Colonic mucosa (tissue), 4 donors: ENCODE measurements at regions of chr7 and their contacts with region 1.

Region 1: GRCh38 chr7:121547544-121548092 is 151.5 kb upstream of the FAM3C start:
- DNase-seq: no peak
- H3K4me3 ChIP-seq: no peak overlapping the region
- H3K27ac ChIP-seq: no peak overlapping the region
- H3K4me1 ChIP-seq: no peaks in the 10 kb centered on the region
- H3K27me3 ChIP-seq: no peaks in the 10 kb centered on the region
- CTCF ChIP-seq: peak; percentile 76

Region 2: DNA sequence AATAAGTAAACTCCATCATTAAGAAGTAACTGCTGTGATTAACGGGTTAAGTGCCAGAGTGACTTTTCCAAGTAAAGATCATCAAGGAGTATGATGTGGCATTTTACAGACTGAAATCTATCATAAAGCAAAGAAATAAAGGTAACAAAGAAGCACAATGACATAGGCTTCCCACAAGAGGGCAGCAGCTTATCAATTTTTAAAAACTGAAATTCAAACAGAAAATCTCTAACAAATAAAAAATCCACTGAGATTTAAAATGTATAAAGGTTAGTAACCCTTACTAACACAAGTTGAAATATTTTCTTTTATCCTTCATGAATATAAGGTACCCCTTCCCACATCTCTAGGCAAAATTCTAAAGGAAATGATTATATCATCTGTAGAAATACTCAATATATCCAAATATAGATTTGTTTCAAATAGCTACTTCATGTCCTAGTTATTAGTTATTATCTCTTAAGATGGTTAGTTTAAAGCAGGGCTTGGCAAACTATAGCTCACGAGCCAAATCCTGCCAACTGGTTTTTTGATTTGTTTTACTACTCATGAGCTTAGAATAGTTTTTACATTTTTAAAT is 180.7 kb before region 1 on chr7:
- intact Hi-C with region 1: loop called (anchors 2 kb)
- DNase-seq: no peak
- H3K4me3 ChIP-seq: no peak overlapping the region
- H3K27ac ChIP-seq: no peak overlapping the region
- H3K4me1 ChIP-seq: no peaks in the 10 kb centered on the region
- H3K27me3 ChIP-seq: no peaks in the 10 kb centered on the region
- CTCF ChIP-seq: peak; percentile 63